ENCODE measurements at regions of chr12 and their contacts with region 1.

Region 1: DNA sequence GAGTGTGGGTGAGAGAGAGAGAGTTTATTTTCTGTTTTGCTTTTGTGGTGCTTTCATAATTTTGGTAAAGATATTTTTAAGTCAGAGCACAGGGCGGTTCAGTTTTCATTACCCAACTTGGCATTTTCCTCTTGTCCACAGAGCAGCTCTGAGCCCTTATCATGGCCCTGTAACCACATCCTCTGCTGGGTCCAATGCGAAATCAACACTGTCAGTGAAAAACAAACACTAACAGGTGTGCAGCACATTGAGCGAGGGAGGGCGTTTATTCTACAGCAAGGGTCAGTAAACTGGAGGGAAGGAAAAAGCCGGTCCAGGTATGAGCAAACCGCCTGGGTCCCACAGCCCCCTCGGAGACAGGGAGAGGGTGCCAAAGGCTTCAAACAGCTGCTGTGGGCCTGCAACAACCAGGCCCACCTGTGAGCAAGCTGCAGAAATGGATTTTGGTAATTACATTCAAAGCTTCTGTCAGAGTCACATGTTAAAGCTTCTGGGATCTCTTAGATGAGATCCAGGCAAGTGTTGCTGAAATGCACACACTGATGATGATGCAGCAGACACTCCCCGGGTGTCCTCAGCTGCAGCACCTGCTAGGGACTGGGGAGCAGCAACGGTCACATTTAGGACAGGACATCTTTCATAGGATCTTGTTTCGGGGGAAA is 132.7 kb upstream of the DYRK2 start:
- DNase-seq: peak in 11 of 14 experiments; percentile 5 to 88 (median 30)
- ATAC-seq: peak; percentile 88
- H3K4me3 ChIP-seq: peak overlapping the region; percentile 11
- H3K4me3 Mint-ChIP-seq: peak overlapping the region; percentile 34
- H3K27ac ChIP-seq: peak overlapping the region in 1 of 2 donors; percentile 1
- H3K27ac Mint-ChIP-seq: peak overlapping the region; percentile 57
- H3K4me1 ChIP-seq: peaks cover 52% of the 10 kb centered on the region
- H3K4me1 Mint-ChIP-seq: peaks cover 56% of the 10 kb centered on the region
- H3K27me3 ChIP-seq: no peaks in the 10 kb centered on the region
- H3K27me3 Mint-ChIP-seq: no peaks in the 10 kb centered on the region
- CTCF ChIP-seq: no peak

Region 2: GRCh38 chr12:67306712-67307111 is 209.1 kb before region 1 on chr12:
- CTCF ChIA-PET with region 1: no interaction called
- POLR2A ChIA-PET with region 1: no interaction called
- intact Hi-C with region 1: no loop called
- DNase-seq: no peak
- ATAC-seq: no peak
- H3K4me3 ChIP-seq: no peak overlapping the region
- H3K4me3 Mint-ChIP-seq: no peak overlapping the region
- H3K27ac ChIP-seq: no peak overlapping the region
- H3K27ac Mint-ChIP-seq: no peak overlapping the region
- H3K4me1 ChIP-seq: no peaks in the 10 kb centered on the region
- H3K4me1 Mint-ChIP-seq: peaks cover 5% of the 10 kb centered on the region
- H3K27me3 ChIP-seq: no peaks in the 10 kb centered on the region
- H3K27me3 Mint-ChIP-seq: no peaks in the 10 kb centered on the region
- CTCF ChIP-seq: no peak

Region 3: DNA sequence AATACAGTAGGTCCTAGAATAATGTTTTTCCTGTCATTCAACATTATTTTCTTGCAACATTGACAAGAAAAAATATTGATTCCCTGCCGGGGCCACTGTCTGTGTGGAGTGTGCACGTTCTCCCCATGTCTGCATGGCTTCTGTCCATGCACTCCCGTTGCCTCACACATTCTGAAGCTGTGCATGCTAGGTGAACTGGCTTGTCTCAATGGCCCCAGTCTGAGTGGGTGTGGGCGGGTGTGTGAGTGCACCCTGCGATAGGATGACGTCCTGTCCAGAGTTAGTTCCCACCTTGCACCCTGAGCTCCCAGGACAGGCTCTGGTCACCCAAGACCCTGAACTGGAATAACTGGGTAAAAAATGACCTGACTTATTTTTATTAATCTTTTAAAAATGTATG is 60.6 kb before region 1 on chr12:
- CTCF ChIA-PET with region 1: no interaction called
- POLR2A ChIA-PET with region 1: no interaction called
- intact Hi-C with region 1: loop called in 1 of 2 experiments (anchors 2 kb)
- DNase-seq: no peak
- ATAC-seq: no peak
- H3K4me3 ChIP-seq: no peak overlapping the region
- H3K4me3 Mint-ChIP-seq: no peak overlapping the region
- H3K27ac ChIP-seq: no peak overlapping the region
- H3K27ac Mint-ChIP-seq: no peak overlapping the region
- H3K4me1 ChIP-seq: peaks cover 15% of the 10 kb centered on the region
- H3K4me1 Mint-ChIP-seq: peaks cover 26% of the 10 kb centered on the region
- H3K27me3 ChIP-seq: no peaks in the 10 kb centered on the region
- H3K27me3 Mint-ChIP-seq: no peaks in the 10 kb centered on the region
- CTCF ChIP-seq: no peak

Region 4: GRCh38 chr12:67482751-67483671 is 32.8 kb before region 1 on chr12:
- CTCF ChIA-PET with region 1: interaction called, 3 read pairs
- POLR2A ChIA-PET with region 1: interaction called, 11 read pairs
- intact Hi-C with region 1: no loop called
- DNase-seq: peak; percentile 58 to 95 (median 84)
- ATAC-seq: peak; percentile 92
- H3K4me3 ChIP-seq: no peak overlapping the region
- H3K4me3 Mint-ChIP-seq: peak overlapping the region; percentile 23
- H3K27ac ChIP-seq: peak overlapping the region; percentile 3 to 66
- H3K27ac Mint-ChIP-seq: peak overlapping the region; percentile 84
- H3K4me1 ChIP-seq: peaks cover 47% of the 10 kb centered on the region
- H3K4me1 Mint-ChIP-seq: peaks cover 52% of the 10 kb centered on the region
- H3K27me3 ChIP-seq: no peaks in the 10 kb centered on the region
- H3K27me3 Mint-ChIP-seq: no peaks in the 10 kb centered on the region
- CTCF ChIP-seq: no peak

Region 5: DNA sequence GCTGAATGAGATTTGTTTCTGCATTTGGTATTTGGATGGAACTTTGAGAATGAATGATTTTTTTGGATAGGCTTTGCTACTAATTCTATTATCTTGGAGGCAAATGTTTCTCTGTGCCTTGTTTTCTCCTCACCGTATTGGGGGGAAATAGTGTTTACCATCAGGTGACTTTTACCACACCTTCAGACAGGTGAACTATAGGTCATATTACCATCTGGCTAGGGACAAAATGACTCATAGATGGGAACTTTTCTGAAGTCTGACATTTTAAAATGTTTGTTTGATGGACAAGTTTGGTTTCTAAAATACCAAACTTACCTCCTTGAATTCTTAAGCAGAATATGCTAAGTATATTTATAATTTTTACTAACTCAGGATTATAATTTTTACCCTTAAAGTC is 13.0 kb after region 1 on chr12:
- CTCF ChIA-PET with region 1: no interaction called
- POLR2A ChIA-PET with region 1: interaction called, 10 read pairs
- intact Hi-C with region 1: no loop called
- DNase-seq: no peak
- ATAC-seq: no peak
- H3K4me3 ChIP-seq: no peak overlapping the region
- H3K4me3 Mint-ChIP-seq: no peak overlapping the region
- H3K27ac ChIP-seq: no peak overlapping the region
- H3K27ac Mint-ChIP-seq: no peak overlapping the region
- H3K4me1 ChIP-seq: peaks cover 6% of the 10 kb centered on the region
- H3K4me1 Mint-ChIP-seq: peaks cover 16% of the 10 kb centered on the region
- H3K27me3 ChIP-seq: no peaks in the 10 kb centered on the region
- H3K27me3 Mint-ChIP-seq: no peaks in the 10 kb centered on the region
- CTCF ChIP-seq: no peak

Region 6: DNA sequence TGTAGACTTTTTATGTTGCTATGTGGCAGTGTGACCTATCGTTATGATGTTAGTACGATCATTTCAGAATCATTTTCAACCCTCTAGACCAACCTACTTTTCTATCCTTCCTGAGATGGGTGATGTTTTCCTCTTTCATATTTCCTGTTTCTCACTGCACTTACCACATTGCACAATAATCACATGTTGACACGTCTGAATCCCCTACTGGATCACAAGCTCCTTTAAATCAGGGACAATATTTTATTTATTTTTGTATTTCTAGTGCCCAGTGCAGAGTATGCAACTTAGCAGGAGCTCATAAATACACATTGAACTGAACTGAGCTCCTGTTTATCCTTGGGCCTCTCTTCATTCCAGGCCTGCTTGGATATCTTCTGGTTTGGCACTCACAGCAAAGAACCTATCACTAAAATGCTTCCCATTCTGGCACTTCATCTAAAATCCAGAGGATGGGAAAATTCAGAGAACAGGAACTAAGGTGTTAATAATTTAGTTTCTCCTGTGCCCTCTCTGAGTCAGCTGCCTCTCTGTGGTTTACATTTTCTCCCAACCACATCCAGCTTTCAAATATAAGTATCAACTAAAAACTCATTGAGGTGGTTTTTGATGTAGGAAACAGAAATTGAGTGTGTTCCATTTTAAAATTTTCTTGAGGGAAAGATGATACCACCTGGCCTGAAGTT is 63.3 kb after region 1 on chr12:
- CTCF ChIA-PET with region 1: no interaction called
- POLR2A ChIA-PET with region 1: interaction called, 11 read pairs
- intact Hi-C with region 1: no loop called
- DNase-seq: peak in 6 of 14 experiments; percentile 4 to 88 (median 46)
- ATAC-seq: peak; percentile 79
- H3K4me3 ChIP-seq: peak overlapping the region; percentile 1
- H3K4me3 Mint-ChIP-seq: peak overlapping the region; percentile 58
- H3K27ac ChIP-seq: peak overlapping the region in 1 of 2 donors; percentile 32
- H3K27ac Mint-ChIP-seq: peak overlapping the region; percentile 22
- H3K4me1 ChIP-seq: peaks cover 22% of the 10 kb centered on the region
- H3K4me1 Mint-ChIP-seq: peaks cover 63% of the 10 kb centered on the region
- H3K27me3 ChIP-seq: no peaks in the 10 kb centered on the region
- H3K27me3 Mint-ChIP-seq: no peaks in the 10 kb centered on the region
- CTCF ChIP-seq: no peak